ENCODE measurements at regions of chr11 and their contacts with region 1.

Region 1: DNA sequence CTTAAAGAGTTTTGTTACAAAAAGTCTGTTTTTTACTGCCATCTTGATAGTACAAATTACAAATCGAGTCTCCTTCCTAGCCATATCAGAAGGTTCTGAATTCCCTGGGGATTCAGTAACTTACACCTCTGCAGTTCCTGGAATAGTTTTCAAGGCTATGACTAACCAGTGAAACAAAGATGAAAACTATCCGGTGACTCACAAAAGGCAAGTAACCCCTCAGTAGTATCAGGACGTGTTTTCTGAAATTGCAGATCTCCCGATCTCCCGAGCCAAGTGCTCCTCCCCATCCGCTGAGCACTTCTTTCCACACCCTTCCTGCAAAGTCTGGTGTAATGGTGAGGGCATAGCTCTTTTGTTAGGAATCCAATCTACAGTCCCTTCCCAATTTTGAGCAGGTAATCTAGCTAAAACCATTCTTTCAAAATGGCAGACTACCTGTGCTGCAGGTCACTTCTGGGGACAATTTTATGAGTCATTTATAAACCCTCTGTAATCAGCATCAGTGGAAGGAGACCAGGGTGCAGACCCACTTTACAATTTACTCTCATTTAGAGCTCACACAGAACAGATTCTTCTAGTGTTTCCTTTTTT is 7.7 kb downstream of the E2F8 start:
- DNase-seq: peak; percentile 87
- ATAC-seq: peak; percentile 96
- H3K4me3 ChIP-seq: peak overlapping the region; percentile 41; the same call in 1 of the 2 replicates
- H3K27ac ChIP-seq: peak overlapping the region; percentile 78
- H3K4me1 ChIP-seq: peaks cover 28% of the 10 kb centered on the region
- H3K27me3 ChIP-seq: no peaks in the 10 kb centered on the region
- CTCF ChIP-seq: no peak

Region 2: GRCh38 chr11:19200410-19201201 is 32.4 kb before region 1 on chr11:
- CTCF ChIA-PET with region 1: no interaction called
- POLR2A ChIA-PET with region 1: no interaction called
- intact Hi-C with region 1: loop called (anchors 1 kb)
- DNase-seq: peak; percentile 89
- ATAC-seq: peak; percentile 91
- H3K4me3 ChIP-seq: no peak overlapping the region
- H3K27ac ChIP-seq: peak overlapping the region; percentile 49
- H3K4me1 ChIP-seq: peaks cover 28% of the 10 kb centered on the region
- H3K27me3 ChIP-seq: no peaks in the 10 kb centered on the region
- CTCF ChIP-seq: no peak

Region 3: DNA sequence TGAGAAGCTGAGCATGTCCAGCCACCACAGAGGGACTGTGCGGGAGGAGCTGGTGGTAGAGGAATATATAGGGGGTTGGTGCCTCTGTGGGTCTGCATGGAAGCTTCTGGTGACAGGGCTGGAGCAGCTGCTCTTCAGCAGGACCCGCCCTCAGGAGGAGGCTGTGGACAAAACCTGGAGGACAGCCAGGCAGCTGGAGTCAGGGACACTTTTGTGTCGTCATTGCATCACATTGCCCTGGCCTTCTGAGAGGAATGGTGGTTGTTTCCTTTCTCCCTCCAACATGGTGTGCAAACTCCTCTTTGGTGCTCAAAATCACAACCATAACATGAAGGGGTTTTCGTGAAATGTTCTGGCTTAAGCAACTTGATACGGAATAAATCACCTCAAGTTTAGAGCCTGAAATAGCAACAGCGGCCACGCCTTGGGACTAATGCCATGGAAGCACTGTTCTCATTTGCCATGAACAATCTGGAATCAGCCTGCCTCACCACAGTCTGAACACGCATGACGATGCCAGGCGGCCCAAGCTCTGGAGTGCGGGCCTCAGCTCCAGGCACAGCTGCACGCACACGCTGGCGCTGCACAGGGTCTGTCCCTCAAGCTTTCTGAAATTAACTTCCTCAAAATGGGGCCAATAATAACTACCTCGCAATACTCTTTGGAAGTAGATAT is 14.1 kb before region 1 on chr11:
- CTCF ChIA-PET with region 1: no interaction called
- POLR2A ChIA-PET with region 1: no interaction called
- intact Hi-C with region 1: loop called (anchors 2 kb)
- DNase-seq: no peak
- ATAC-seq: no peak
- H3K4me3 ChIP-seq: no peak overlapping the region
- H3K27ac ChIP-seq: no peak overlapping the region
- H3K4me1 ChIP-seq: peaks cover 9% of the 10 kb centered on the region; the same call in 1 of the 2 replicates
- H3K27me3 ChIP-seq: no peaks in the 10 kb centered on the region
- CTCF ChIP-seq: no peak

Region 4: DNA sequence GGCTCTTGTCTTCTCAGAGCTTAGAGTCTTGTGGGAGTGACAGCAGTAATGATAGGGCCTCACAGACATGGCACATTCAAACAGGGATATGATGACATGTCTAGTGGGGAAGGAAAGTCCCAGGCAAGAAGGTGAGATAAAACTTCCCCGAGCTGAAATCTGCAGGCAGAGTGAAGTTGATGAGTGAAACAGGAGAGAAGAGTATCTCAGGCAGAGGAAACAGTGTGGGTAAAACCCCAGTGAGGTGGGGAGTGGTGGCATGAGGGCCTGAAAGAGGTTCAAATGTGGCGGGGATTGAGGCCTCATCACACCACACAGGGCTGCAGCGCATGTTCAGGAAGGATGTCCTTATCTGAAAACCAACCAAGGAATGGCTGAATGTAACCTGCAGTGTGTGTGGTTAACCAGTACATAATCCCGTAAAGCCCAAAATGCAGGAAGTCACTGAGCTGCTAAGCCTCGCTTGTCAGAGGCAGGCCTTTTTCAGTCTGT is 161.6 kb after region 1 on chr11:
- CTCF ChIA-PET with region 1: no interaction called
- POLR2A ChIA-PET with region 1: no interaction called
- intact Hi-C with region 1: no loop called
- DNase-seq: no peak
- ATAC-seq: no peak
- H3K4me3 ChIP-seq: no peak overlapping the region
- H3K27ac ChIP-seq: no peak overlapping the region
- H3K4me1 ChIP-seq: peaks cover 17% of the 10 kb centered on the region
- H3K27me3 ChIP-seq: no peaks in the 10 kb centered on the region
- CTCF ChIP-seq: no peak